CD8-positive, alpha-beta T cell (primary cell): ENCODE measurements at regions of chr2 and their contacts with region 1.

Region 1: DNA sequence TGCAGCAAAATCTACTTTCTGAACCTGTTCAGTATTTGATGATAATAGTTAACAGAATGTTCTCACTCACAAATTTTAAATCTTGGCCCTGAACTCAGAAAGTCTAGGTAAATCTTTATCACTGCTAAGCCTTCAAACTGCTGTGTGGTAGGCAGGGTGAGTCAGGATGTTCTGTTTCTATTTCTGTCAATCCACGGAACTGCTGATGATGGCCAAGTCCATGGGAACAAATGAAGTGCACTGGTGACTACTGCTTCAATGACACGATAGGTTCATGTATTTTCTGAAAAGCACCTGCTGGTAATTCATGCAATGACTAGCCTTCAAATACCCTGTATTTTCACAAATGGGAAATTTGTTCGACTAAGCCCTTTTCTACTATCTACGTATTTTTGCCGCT is 14.2 kb downstream of the NIFK start:
- DNase-seq: no peak
- ATAC-seq: no peak
- H3K4me3 ChIP-seq: no peak overlapping the region
- H3K4me3 Mint-ChIP-seq: no peak overlapping the region
- H3K27ac ChIP-seq: no peak overlapping the region
- H3K27ac Mint-ChIP-seq: no peak overlapping the region
- H3K4me1 ChIP-seq: no peaks in the 10 kb centered on the region
- H3K4me1 Mint-ChIP-seq: peaks cover 3% of the 10 kb centered on the region
- H3K27me3 ChIP-seq: no peaks in the 10 kb centered on the region
- H3K27me3 Mint-ChIP-seq: no peaks in the 10 kb centered on the region
- CTCF ChIP-seq: no peak

Region 2: DNA sequence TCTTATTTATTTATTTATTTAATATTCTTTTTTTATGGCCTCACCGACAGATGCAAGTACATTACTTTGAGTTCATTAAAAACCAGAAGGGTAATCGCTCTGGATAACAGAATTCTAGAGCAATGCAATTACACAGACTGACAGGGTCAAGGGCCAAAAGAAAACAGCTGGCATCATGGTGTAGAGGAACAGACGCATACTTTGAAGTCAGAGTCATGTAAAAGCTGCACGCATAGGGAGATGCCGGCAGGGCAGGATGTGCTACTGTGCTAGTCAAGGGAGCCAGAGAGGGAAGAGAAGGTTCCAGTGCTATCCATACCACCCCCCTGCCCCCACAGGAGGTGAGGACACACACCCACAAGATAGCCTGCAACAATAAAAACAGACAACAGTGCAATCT is 322.3 kb before region 1 on chr2:
- CTCF ChIA-PET with region 1: interaction called, 16 read pairs
- POLR2A ChIA-PET with region 1: no interaction called
- intact Hi-C with region 1: loop called in 1 of 2 experiments (anchors 1 kb)
- DNase-seq: no peak
- ATAC-seq: no peak
- H3K4me3 ChIP-seq: no peak overlapping the region
- H3K4me3 Mint-ChIP-seq: no peak overlapping the region
- H3K27ac ChIP-seq: no peak overlapping the region
- H3K27ac Mint-ChIP-seq: no peak overlapping the region
- H3K4me1 ChIP-seq: no peaks in the 10 kb centered on the region
- H3K4me1 Mint-ChIP-seq: peaks cover 2% of the 10 kb centered on the region
- H3K27me3 ChIP-seq: no peaks in the 10 kb centered on the region
- H3K27me3 Mint-ChIP-seq: no peaks in the 10 kb centered on the region
- CTCF ChIP-seq: no peak

Region 3: DNA sequence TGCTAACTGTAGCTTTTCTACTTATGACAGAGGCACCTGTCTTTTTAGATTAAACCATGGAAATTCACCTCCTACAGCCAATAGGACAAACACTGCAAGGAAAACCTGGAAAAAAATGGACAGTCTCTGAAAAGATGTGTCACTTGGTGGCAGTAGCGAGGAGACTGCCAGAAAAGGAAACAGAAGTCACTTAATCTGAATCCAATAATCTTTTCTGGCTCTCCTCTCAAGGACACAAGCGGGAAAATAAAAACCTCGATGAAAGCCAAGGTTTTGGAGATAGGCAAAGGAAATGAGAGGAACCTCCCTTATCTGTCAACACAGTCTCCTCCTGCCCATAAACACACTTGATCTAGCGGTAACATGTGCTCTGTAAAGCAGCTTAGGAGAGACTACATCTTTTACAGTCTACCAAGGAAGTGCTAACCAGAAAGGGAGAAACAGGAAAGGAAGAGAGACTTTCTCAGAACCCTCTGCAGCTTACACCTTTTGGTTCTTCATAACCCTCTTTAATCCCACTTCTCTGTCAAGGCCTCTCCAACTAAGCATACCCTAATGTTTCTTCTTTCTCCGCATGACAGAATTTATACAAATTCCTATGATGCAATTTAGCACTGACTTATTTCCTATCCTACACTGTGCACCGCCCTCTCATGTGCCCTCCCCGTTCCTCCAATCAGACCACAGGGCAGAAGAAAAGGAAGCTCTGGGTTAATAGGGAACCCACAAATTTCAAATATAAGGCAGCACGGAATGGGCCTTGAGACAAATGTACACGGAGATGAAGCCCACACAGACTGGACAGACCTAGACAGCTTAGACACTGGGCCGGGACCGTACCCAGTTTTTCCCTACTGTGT is 126.0 kb before region 1 on chr2:
- CTCF ChIA-PET with region 1: interaction called, 4 read pairs
- POLR2A ChIA-PET with region 1: no interaction called
- intact Hi-C with region 1: loop called (anchors 1 to 2 kb)
- DNase-seq: peak in 2 of 9 experiments; percentile 18 to 39
- ATAC-seq: peak; percentile 65
- H3K4me3 ChIP-seq: no peak overlapping the region
- H3K4me3 Mint-ChIP-seq: peak overlapping the region; percentile 54
- H3K27ac ChIP-seq: peak overlapping the region in 1 of 2 experiments; percentile 55
- H3K27ac Mint-ChIP-seq: peak overlapping the region; percentile 78
- H3K4me1 ChIP-seq: peaks cover 31% of the 10 kb centered on the region
- H3K4me1 Mint-ChIP-seq: peaks cover 60% of the 10 kb centered on the region
- H3K27me3 ChIP-seq: no peaks in the 10 kb centered on the region
- H3K27me3 Mint-ChIP-seq: no peaks in the 10 kb centered on the region
- CTCF ChIP-seq: no peak